Heart right ventricle (tissue), 16 donors: ENCODE measurements at regions of chr1 and their contacts with region 1.

Region 1: DNA sequence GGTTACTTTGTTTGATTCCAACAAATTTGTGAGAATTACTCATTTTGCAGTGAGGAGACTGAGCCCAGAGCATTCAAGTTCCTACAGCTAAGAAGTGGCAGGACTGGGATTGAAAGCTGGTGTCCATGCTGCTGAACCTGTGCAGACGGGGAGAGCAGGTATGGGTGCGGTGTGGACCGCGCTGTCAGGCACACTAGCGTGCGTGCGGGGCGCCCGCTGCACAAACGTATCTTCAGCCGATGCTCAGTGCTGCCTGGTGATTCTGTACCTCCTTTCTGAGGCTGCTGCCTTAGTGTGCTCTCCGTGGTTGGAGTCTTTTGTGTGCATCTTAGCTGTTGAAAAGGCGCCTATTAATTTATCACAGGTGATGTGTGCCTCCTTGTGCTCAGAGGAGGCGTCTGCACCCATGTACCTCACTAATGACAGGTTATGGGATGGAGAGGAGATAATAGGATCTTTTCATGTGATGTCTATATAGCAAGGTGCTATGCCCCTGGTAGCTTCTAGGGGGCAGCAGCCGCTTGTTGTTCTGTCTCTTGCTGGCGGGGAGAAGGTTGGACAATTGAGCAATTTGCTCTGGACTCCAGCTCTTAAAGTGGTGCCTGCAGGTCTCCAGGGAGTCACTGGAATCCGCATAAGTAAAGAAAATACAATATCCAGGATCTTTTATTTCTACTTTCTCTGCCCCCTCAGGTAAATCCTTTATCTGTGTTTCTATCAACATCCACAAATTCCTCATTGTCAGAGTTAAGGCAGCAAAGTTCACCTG is 32.5 kb downstream of the PEX14 start:
- DNase-seq: peak; percentile 49 to 54
- ATAC-seq: peak; percentile 41 to 88 (median 84)
- H3K4me3 ChIP-seq: no peak overlapping the region
- H3K27ac ChIP-seq: no peak overlapping the region
- H3K4me1 ChIP-seq: peaks cover 0 to 41% (median 26%) of the 10 kb centered on the region in 9 donors
- H3K27me3 ChIP-seq: no peaks in the 10 kb centered on the region
- CTCF ChIP-seq: peak; percentile 65 to 88 (median 82)

Region 2: DNA sequence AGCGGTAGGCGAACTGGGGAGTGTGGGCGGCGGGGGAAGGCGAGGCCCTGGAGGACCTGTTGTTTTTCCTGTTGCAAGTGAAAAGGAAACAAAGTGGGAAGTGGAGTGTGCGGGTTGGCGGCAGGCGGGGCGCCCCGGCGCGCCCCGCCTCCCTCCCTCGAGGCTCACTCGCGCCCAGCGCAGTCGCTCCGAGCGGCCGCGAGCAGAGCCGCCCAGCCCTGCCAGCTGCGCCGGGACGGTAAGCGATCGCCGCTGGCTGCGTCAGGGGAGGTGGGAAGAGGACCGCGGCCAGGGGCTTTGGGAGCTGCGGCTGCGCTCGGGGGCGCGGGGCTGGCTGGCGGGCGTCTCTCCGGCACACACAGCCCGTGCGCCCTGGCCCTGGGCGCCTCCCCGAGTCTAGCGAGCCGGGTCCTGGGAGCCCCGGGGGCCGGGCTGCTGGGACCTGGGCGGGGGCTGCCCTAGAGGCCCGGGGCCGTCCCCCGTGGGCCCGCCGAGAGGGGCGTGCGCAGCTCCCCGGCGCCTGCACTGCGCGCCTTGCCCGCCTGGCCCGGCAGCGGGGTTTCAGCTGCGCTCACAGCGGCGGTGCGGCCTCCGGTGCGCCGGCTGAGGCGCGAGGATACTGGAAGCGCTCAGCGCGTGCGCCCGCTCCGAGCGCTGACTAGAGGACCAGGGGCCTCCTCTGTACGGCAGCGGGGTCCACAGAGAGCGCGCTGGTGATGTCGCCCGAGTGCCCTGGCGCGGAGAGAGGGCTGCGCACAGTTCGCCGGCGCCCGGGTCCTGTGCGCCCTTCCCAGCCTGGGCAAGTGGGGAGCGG is 855.5 kb before region 1 on chr1 and contains the start of gene PIK3CD:
- intact Hi-C with region 1: no loop called
- DNase-seq: peak in 1 of 2 donors; percentile 32
- ATAC-seq: peak in 7 of 8 donors; percentile 27 to 69 (median 50)
- H3K4me3 ChIP-seq: peak within 1 kb of the TSS; percentile 7 to 86 (median 56)
- H3K27ac ChIP-seq: peak within 1 kb of the TSS in 6 of 10 donors; percentile 39 to 96 (median 46)
- H3K4me1 ChIP-seq: peaks cover 2 to 49% (median 17%) of the 10 kb centered on the region in 9 donors
- H3K27me3 ChIP-seq: peaks cover 0 to 51% (median 43%) of the 10 kb centered on the region in 7 donors
- CTCF ChIP-seq: no peak
- total RNA-seq, gene PIK3CD: 1.9 to 12.1 (median 3.0) TPM

Region 3: GRCh38 chr1:10646347-10646861 is 139.1 kb after region 1 on chr1:
- intact Hi-C with region 1: loop called in 1 of 10 experiments (anchors 10 kb)
- DNase-seq: peak; percentile 54 to 69
- ATAC-seq: peak; percentile 72 to 87 (median 82)
- H3K4me3 ChIP-seq: no peak overlapping the region
- H3K27ac ChIP-seq: peak overlapping the region in 2 of 10 donors; percentile 32 to 53
- H3K4me1 ChIP-seq: peaks cover 0 to 18% (median 0%) of the 10 kb centered on the region in 9 donors
- H3K27me3 ChIP-seq: no peaks in the 10 kb centered on the region
- CTCF ChIP-seq: peak in 3 of 9 donors; percentile 35 to 48 (median 42)

Region 4: DNA sequence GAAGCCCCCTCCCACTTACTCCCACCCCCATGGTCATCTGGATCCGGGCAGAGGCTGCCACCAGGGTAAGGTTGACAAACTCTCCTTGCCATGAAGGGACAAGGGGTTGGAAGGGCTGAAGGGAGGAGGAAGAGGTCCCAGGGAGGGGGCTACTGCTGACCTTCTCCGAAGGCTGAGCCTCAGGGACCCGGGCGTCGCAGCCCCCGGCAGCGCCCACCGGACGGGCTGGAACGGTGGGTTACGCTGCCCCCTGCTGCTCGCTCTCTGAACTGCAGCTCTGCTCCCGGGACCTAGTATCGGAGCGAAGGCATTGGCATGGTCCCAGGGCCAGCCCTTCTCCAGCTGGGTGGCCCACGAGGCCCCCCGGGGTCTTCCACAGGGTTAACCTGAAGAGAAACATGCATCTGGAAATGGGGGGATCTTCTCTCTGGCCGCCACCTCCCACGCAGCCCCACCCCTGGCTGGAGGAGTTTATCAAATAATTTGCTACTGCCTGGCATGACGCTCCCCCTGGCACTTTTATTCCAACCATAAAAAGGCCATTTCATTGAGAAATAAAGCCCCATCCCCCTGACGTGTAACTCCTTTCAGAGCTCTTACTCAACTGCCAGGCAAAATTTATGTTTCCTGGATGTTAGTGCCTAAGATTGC is 434.7 kb after region 1 on chr1:
- intact Hi-C with region 1: loop called in 3 of 10 experiments (anchors 5 to 10 kb)
- DNase-seq: peak; percentile 40 to 65
- ATAC-seq: peak in 2 of 8 donors; percentile 31 to 55
- H3K4me3 ChIP-seq: no peak overlapping the region
- H3K27ac ChIP-seq: no peak overlapping the region
- H3K4me1 ChIP-seq: peaks cover 5 to 32% (median 17%) of the 10 kb centered on the region in 9 donors
- H3K27me3 ChIP-seq: peaks cover 0 to 26% (median 0%) of the 10 kb centered on the region in 7 donors
- CTCF ChIP-seq: peak; percentile 74 to 96 (median 89)

Region 5: DNA sequence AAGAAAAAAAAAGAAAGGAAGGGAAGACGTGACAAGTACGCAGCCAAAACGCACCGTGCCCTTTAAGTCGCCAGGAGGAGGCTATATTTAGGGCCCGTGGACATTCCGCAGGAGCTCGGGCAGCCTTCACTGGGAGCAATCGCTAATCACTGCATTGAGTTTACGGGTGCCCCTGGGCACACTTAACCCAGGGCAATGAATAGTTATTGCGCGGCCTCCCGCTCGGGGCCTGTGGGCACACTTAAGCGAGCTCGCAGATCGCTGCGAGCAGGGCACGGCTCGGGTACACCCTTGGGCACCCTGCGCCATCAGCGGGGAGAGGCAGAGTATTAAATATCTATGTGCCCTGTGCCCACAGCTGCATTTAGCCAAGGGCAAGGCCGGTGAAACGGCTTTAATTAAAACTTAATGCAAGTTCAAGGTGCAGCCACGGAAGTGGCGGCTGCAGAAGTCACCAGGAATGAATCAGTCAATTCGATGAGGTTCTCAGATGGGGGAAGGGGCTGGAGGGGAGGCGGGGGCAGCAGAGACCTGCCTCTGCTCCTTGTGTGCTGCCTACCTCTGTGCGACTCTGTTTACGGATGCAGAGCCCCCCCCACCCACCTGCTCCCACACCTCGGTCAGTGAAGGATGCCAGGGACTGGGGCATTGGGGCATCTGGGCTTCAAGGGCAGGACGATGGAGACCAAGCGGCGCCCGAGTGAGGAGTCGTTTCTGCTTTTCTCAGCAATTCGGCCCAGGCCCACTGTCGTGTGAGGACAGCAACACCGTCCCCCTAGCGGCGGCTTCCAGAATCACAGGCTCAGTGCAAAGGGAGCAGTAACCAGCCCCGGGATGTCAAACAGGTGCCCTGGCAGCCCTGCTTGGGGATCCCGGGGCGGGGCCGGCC is 453.4 kb after region 1 on chr1:
- intact Hi-C with region 1: loop called in 1 of 10 experiments (anchors 10 kb)
- DNase-seq: peak; percentile 83 to 86
- ATAC-seq: peak; percentile 76 to 89 (median 80)
- H3K4me3 ChIP-seq: peak overlapping the region in 5 of 10 donors; percentile 4 to 22 (median 7)
- H3K27ac ChIP-seq: peak overlapping the region in 8 of 10 donors; percentile 5 to 71 (median 54)
- H3K4me1 ChIP-seq: peaks cover 0 to 22% (median 8%) of the 10 kb centered on the region in 9 donors
- H3K27me3 ChIP-seq: peaks cover 0 to 26% (median 9%) of the 10 kb centered on the region in 7 donors
- CTCF ChIP-seq: peak; percentile 66 to 88 (median 84)